ENCODE measurements at regions of chr16 and their contacts with region 1.

Region 1: GRCh38 chr16:86834451-86835035 is 256.2 kb downstream of the FOXL1 start:
- DNase-seq: no peak
- H3K4me3 ChIP-seq: no peak overlapping the region
- H3K27ac ChIP-seq: no peak overlapping the region
- H3K4me1 ChIP-seq: no peaks in the 10 kb centered on the region
- H3K27me3 ChIP-seq: no peaks in the 10 kb centered on the region
- CTCF ChIP-seq: peak in 2 of 3 experiments; percentile 16 to 33

Region 2: GRCh38 chr16:85928401-85928820 is 906.1 kb before region 1 on chr16:
- intact Hi-C with region 1: no loop called
- DNase-seq: peak; percentile 41 to 69
- H3K4me3 ChIP-seq: no peak overlapping the region
- H3K27ac ChIP-seq: no peak overlapping the region
- H3K4me1 ChIP-seq: no peaks in the 10 kb centered on the region
- H3K27me3 ChIP-seq: no peaks in the 10 kb centered on the region
- CTCF ChIP-seq: no peak

Region 3: DNA sequence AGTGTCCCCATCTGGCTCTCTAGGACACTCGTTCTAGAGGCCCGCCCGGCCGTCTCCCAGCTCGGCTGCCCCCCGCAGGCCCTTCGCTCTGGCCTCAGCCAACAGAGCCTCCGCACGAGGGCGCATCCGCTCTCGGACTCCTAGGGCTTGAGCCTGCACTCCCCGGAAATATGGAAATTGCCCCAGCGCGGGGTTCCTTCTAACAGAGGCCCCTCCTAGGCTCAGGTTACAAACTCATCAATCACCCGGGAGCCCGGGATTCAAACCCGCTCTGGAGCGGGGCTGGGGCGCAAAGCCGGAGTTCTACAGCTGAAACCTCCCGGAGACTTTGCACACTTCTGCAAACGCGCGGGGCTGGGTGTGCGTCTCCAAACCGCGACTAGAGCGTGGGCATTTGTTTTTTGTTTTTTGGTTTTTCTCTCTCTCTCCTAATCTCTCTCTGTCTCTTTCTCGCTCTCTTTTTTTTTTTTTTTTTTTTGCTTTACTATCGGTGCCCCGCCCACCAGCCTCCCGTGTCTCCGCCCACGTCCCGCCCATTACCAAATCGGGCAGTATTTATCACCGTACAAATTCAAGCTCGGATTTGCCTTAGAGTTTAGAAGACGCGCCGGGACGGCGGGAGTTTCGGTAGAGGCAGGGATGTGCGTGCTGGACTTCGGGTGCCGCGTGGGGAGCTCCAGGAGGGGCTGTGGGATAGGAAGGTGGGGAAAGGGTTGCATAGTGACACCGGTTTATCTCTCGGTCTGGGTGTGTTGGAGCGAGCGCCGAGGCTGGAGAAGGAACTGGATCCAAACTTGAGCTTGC is 258.6 kb before region 1 on chr16:
- intact Hi-C with region 1: loop called (anchors 5 kb)
- DNase-seq: peak; percentile 75 to 96
- H3K4me3 ChIP-seq: peak overlapping the region; percentile 57 to 79
- H3K27ac ChIP-seq: peak overlapping the region; percentile 91 to 99
- H3K4me1 ChIP-seq: peaks cover 7 to 53% of the 10 kb centered on the region in 2 donors
- H3K27me3 ChIP-seq: no peaks in the 10 kb centered on the region
- CTCF ChIP-seq: peak; percentile 68 to 75 (median 70)

Region 4: GRCh38 chr16:86783636-86784626 is 50.6 kb before region 1 on chr16:
- intact Hi-C with region 1: loop called (anchors 5 kb)
- DNase-seq: peak in 1 of 2 donors; percentile 74
- H3K4me3 ChIP-seq: no peak overlapping the region
- H3K27ac ChIP-seq: no peak overlapping the region
- H3K4me1 ChIP-seq: no peaks in the 10 kb centered on the region
- H3K27me3 ChIP-seq: no peaks in the 10 kb centered on the region
- CTCF ChIP-seq: no peak

Region 5: DNA sequence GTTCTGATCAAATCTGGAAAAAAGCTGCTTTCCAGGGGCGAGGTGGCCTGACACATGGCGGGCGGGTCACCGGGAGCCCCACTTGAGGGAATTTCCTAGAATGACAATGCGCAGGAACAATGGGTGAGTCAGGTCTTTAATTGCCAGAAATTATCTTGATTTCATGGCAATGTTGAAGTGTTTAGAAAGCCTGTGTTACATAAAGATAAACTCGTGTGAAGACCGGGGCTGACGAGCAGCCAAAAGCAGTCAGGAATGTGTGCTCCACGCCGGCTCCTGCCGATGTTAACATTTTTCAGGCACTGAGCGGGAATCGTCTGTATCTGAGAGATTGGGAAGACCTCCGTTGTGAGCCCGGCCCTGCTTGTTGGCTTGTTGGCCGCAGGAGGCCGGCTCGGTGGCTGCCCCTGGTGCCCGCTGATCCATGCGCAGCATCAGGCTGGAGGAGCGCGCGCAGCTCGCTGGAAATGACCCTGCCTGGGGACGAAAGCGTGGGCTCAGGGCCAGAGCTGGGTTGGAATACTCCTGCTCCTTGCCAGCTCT is 96.9 kb after region 1 on chr16:
- intact Hi-C with region 1: loop called (anchors 5 kb)
- DNase-seq: peak in 1 of 2 donors; percentile 80
- H3K4me3 ChIP-seq: peak overlapping the region; percentile 0 to 27
- H3K27ac ChIP-seq: peak overlapping the region; percentile 52 to 59
- H3K4me1 ChIP-seq: peaks cover 0 to 28% of the 10 kb centered on the region in 2 donors
- H3K27me3 ChIP-seq: no peaks in the 10 kb centered on the region
- CTCF ChIP-seq: peak in 1 of 3 experiments; percentile 19

Measured in ascending aorta (tissue), 2 donors.